ENCODE measurements at regions of chr7 and their contacts with region 1.

Region 1: DNA sequence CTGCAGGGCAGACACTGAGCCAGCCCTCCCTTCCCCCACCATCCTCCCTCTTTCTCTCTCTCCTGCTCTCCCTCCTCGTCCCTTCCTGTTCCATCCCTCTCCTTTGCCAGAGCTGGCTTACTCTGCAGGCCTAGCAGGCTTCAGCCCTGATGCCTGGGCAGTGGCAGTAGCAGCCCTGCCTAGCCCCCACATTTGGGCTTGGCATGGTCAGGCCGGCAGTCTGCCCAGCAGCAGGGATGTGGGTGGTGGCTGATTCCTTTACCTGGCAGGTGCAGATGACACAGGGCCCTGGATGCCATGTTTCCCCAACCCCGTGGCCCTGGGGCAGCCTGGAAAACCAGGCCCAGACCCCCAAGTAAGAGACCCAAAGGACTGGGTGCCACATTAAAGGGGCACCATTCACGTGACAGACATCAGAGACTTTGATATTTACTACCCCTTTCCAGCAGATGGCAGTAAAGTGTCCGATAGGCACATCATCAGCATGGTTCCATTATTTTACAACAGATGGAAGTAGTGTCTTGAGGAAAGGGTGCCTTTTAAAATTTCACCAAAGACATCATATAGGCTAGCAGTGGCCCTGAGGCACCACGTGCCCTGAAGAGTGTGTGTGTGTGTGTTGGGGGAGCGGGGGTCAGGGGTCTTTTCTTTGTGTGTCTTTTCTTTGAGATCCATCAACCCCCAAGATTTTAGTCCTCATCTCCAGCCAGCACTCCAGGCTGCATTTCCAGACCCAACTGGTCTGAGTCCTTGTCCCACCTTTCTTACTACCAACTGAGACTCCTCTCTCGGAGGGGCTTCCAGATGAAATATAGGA is 5.9 kb downstream of the KCP start:
- DNase-seq: peak; percentile 42 to 60
- H3K4me3 ChIP-seq: no peak overlapping the region
- H3K4me1 ChIP-seq: no peaks in the 10 kb centered on the region
- H3K27me3 ChIP-seq: no peaks in the 10 kb centered on the region

Region 2: DNA sequence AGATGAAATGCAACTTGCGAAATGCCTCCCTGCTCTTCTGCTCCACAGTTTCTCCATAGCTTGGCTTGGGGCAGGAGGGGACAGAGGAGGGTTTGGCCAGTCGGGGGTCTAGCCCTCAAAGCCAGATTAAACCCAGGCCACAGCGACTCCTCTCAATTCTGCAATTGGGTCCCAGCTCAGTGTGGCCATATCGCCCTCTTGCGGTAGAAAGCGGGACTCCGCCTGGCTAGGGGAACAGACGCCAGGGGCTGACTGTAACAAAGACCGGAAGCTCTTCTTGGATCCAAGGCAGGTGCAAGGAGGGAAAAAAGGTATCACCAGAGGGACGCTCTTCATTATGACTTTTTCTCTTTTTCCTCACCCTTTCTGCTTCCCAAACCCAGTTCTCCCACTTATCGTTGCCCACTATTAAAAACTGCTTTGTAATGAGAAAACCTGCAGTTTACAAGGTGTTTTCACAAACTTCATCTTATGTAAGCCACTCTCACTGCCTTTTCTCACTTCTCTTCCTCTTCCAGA is 187.0 kb after region 1 on chr7:
- in situ Hi-C with region 1: loop called (anchors 25 kb)
- DNase-seq: peak; percentile 67 to 95
- H3K4me3 ChIP-seq: no peak overlapping the region
- H3K4me1 ChIP-seq: no peaks in the 10 kb centered on the region; the same call in 1 of the 2 replicates
- H3K27me3 ChIP-seq: no peaks in the 10 kb centered on the region

Measured in HAP-1 (cell line).